ENCODE measurements at regions of chr10 and their contacts with region 1.

Region 1: DNA sequence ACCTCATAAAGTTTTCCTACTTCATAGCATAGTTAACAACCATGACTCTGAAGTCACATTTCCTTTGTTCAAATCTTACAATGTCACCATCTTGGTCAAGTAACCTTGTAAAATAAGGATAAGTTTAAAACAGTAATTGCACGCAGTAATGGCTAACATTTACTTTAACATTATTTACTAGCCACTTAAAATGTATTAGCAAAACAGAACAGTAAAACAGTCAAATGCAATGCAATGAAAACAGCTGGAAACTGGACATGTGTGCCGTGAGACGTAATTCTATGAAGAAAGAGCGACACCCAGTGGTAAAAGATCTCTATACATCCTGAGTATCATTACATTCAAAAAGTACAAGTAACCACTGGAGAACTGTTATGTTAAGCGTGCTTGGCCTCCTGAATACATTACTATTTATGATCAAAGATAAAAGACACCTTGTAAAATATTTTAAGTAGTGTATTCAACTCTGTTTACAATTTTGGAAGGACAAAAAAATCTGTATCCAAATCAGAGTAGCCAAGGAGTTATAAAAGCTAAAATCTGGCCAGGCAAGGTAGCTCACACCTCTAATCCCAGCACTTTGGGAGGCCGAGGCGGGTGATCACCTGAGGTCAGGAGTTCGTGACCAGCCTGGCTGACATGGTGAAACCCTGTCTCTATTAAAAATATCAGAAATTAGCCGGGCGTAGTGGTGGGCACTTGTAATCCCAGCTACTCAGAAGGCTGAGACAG is 27.2 kb downstream of the ATE1 start:
- DNase-seq: peak in 2 of 5 donors; percentile 15 to 16
- H3K4me3 ChIP-seq: no peak overlapping the region
- H3K4me3 Mint-ChIP-seq: no peak overlapping the region
- H3K27ac ChIP-seq: no peak overlapping the region
- H3K27ac Mint-ChIP-seq: peak overlapping the region in 3 of 8 donors; percentile 10 to 29 (median 22)
- H3K4me1 ChIP-seq: no peaks in the 10 kb centered on the region
- H3K4me1 Mint-ChIP-seq: peaks cover 5 to 7% (median 6%) of the 10 kb centered on the region in 3 donors
- H3K27me3 ChIP-seq: no peaks in the 10 kb centered on the region
- H3K27me3 Mint-ChIP-seq: no peaks in the 10 kb centered on the region

Region 2: GRCh38 chr10:121873236-121873635 is 27.4 kb before region 1 on chr10:
- CTCF ChIA-PET with region 1: no interaction called
- POLR2A ChIA-PET with region 1: no interaction called
- DNase-seq: no peak
- H3K4me3 ChIP-seq: no peak overlapping the region
- H3K4me3 Mint-ChIP-seq: no peak overlapping the region
- H3K27ac ChIP-seq: no peak overlapping the region
- H3K27ac Mint-ChIP-seq: no peak overlapping the region
- H3K4me1 ChIP-seq: no peaks in the 10 kb centered on the region
- H3K4me1 Mint-ChIP-seq: no peaks in the 10 kb centered on the region
- H3K27me3 ChIP-seq: no peaks in the 10 kb centered on the region
- H3K27me3 Mint-ChIP-seq: peaks cover 0 to 1% of the 10 kb centered on the region in 2 donors

Region 3: GRCh38 chr10:121910673-121911420 is 10.2 kb after region 1 on chr10:
- CTCF ChIA-PET with region 1: interaction called, 10 read pairs
- POLR2A ChIA-PET with region 1: no interaction called
- DNase-seq: no peak
- H3K4me3 ChIP-seq: no peak overlapping the region
- H3K4me3 Mint-ChIP-seq: no peak overlapping the region
- H3K27ac ChIP-seq: no peak overlapping the region
- H3K27ac Mint-ChIP-seq: peak overlapping the region in 2 of 8 donors; percentile 14 to 70
- H3K4me1 ChIP-seq: no peaks in the 10 kb centered on the region
- H3K4me1 Mint-ChIP-seq: peaks cover 8 to 9% (median 8%) of the 10 kb centered on the region in 3 donors
- H3K27me3 ChIP-seq: no peaks in the 10 kb centered on the region
- H3K27me3 Mint-ChIP-seq: no peaks in the 10 kb centered on the region